SK-N-SH (cell line): ENCODE measurements at regions of chr11 and their contacts with region 1.

Region 1: DNA sequence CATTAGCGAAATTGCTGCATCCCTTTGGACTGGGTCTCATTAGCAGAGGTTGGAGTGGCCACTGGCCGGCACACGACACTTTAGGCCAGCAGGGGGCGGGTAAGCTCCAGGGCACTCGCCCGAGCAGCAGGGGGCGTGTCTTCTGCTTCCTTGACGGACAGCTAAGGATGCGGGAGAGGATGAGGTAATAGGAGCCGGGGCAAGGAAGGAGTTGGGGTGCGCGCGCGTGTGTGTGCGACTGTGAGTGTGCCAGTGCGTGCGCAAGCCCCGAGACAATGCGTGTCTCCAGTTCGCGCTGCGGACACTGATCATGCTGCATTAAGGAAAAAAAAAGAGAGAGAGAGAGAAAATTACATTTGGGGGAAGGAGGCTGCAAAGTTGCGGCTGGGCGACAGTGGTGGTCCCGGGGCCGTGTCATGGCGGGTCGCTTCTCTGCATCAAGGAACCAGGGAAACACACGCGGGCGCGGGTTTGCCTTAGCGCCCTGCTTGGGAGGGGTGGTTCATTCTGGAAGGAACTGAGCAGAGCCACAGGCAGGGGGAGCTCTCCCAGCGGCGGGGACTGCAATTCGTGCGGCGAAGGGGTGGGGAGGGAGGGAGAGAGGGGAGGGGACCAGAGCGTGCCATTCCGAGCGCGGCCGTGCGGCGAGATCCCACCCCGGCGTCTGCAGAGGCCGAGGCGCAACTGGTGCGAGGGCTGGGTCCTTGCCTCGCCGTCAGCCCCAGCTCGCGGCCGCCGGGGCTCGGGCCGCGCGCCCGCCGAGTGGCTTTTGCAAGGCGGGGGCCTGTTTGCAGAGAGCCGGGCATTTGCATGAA is at the start of gene DTX4:
- DNase-seq: peak; percentile 92
- H3K4me3 ChIP-seq: peak within 1 kb of the TSS; percentile 48 to 96
- H3K27ac ChIP-seq: no peak within 1 kb of the TSS
- H3K4me1 ChIP-seq: peaks cover 0 to 12% of the 10 kb centered on the region in 2 experiments; a peak in 1 of 4 replicates
- H3K27me3 ChIP-seq: peaks cover 48% of the 10 kb centered on the region
- CTCF ChIP-seq: peak; percentile 89
- EP300 ChIP-seq: no peak
- RAD21 ChIP-seq: peak; percentile 86
- polyA plus RNA-seq, gene DTX4: 0.02 and 0.05 TPM in 2 replicates

Region 2: GRCh38 chr11:58654079-58654907 is 517.4 kb before region 1 on chr11:
- CTCF ChIA-PET with region 1: no interaction called
- POLR2A ChIA-PET with region 1: no interaction called
- DNase-seq: peak; percentile 64
- H3K4me3 ChIP-seq: peak overlapping the region in 1 of 2 experiments; percentile 27; a peak in 1 of 4 replicates
- H3K27ac ChIP-seq: no peak overlapping the region
- H3K4me1 ChIP-seq: no peaks in the 10 kb centered on the region
- H3K27me3 ChIP-seq: no peaks in the 10 kb centered on the region
- CTCF ChIP-seq: peak; percentile 96
- EP300 ChIP-seq: no peak
- RAD21 ChIP-seq: peak; percentile 77

Region 3: GRCh38 chr11:59142530-59143507 is 28.9 kb before region 1 on chr11 and contains the start of gene FAM111A:
- CTCF ChIA-PET with region 1: interaction called, 10 read pairs
- POLR2A ChIA-PET with region 1: no interaction called
- DNase-seq: peak; percentile 84
- H3K4me3 ChIP-seq: peak within 1 kb of the TSS; percentile 82 to 95
- H3K27ac ChIP-seq: peak within 1 kb of the TSS; percentile 71 to 79
- H3K4me1 ChIP-seq: peaks cover 2 to 4% of the 10 kb centered on the region in 2 experiments; a peak in 2 of 4 replicates
- H3K27me3 ChIP-seq: no peaks in the 10 kb centered on the region
- CTCF ChIP-seq: peak; percentile 47
- EP300 ChIP-seq: no peak
- RAD21 ChIP-seq: no peak
- polyA plus RNA-seq, gene FAM111A: 5.9 and 8.7 TPM in 2 replicates

Region 4: DNA sequence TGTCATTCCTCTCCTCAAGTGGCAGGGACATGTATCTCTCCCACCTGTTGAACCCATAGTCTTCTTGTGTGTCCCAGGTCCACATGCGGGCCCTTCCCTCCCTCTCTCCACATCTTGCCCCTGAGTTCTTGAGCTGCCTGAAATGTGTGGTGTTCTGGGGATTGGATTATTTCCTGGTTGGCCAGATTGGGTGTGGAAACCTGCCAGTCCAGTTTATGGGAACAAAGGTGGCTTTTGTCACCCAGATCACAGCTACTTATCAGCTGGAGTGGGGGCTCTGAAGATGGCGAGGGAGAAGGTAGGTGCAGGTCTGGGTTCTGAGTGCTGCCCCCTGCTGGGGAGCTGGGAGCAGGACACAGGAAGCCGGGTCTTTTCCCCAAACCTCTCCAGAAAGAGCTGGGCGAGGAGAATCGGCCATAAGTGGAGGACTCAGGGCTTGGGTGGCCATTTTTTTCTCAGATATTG is 14.4 kb after region 1 on chr11:
- CTCF ChIA-PET with region 1: interaction called, 58 read pairs
- POLR2A ChIA-PET with region 1: no interaction called
- DNase-seq: peak; percentile 68
- H3K4me3 ChIP-seq: no peak overlapping the region; a peak in 1 of 4 replicates
- H3K27ac ChIP-seq: no peak overlapping the region
- H3K4me1 ChIP-seq: no peaks in the 10 kb centered on the region
- H3K27me3 ChIP-seq: peaks cover 5% of the 10 kb centered on the region; the same call in 1 of the 2 replicates
- CTCF ChIP-seq: peak; percentile 59
- EP300 ChIP-seq: no peak
- RAD21 ChIP-seq: no peak

Region 5: GRCh38 chr11:59197991-59198390 is 26.3 kb after region 1 on chr11:
- CTCF ChIA-PET with region 1: interaction called, 29 read pairs
- POLR2A ChIA-PET with region 1: interaction called, 3 read pairs
- DNase-seq: no peak
- H3K4me3 ChIP-seq: no peak overlapping the region
- H3K27ac ChIP-seq: no peak overlapping the region
- H3K4me1 ChIP-seq: peaks cover 0 to 6% of the 10 kb centered on the region in 2 experiments; a peak in 1 of 4 replicates
- H3K27me3 ChIP-seq: 0 out of 2 replicates have a peak, but pooled peaks cover 9% of the 10 kb centered on the region
- CTCF ChIP-seq: no peak
- EP300 ChIP-seq: no peak
- RAD21 ChIP-seq: no peak

Region 6: DNA sequence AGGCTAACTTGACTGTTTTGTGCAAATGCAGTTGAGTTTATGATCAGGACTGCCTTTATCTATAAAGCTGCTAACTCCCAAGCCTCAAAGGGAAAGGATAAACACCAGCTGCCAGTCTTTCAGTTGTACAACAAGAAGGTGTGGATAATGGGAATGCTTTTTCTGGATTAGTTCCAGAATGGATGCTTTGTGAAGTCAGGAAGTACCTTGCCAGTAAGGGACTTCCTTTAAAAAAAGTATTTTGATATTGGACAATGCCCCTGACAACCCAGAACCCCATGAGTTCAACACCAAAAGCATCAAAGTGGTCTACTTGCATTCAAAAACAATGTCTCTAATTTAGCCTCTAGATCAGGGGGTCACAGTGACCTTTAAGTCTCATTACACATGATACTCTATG is 222.5 kb after region 1 on chr11:
- CTCF ChIA-PET with region 1: no interaction called
- POLR2A ChIA-PET with region 1: no interaction called
- DNase-seq: no peak
- H3K4me3 ChIP-seq: no peak overlapping the region
- H3K27ac ChIP-seq: no peak overlapping the region
- H3K4me1 ChIP-seq: no peaks in the 10 kb centered on the region
- H3K27me3 ChIP-seq: no peaks in the 10 kb centered on the region
- CTCF ChIP-seq: no peak
- EP300 ChIP-seq: no peak
- RAD21 ChIP-seq: no peak

Region 7: DNA sequence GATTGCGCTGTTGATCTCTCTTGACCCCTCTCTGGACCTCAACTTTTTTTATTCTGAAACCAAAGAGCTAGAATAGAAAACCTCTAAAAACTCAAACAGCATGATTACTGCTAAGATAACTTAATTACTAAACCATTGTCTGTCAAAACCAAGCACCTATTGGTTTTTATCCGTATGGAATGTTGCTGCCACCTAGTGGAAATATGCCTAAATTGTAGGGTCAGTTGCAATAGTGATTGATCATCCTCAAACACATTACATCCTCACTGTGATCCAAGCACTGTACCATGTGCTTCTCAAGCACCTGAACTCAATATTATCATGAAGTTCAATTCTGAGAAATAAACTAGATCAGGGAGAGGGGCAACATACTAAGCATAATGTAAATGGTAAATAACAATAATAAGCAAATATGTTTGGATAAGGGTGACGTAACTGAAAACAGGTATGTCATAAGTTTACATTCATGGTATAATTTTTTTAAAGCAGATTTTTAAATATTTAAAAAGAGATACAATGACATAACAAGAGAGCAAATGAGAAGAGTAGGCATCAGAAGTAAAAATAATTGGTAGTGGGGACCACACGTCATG is 258.3 kb after region 1 on chr11:
- CTCF ChIA-PET with region 1: interaction called, 12 read pairs
- POLR2A ChIA-PET with region 1: no interaction called
- DNase-seq: peak; percentile 34
- H3K4me3 ChIP-seq: no peak overlapping the region; a peak in 1 of 4 replicates
- H3K27ac ChIP-seq: no peak overlapping the region
- H3K4me1 ChIP-seq: no peaks in the 10 kb centered on the region
- H3K27me3 ChIP-seq: peaks cover 4% of the 10 kb centered on the region; the same call in 1 of the 2 replicates
- CTCF ChIP-seq: peak; percentile 71
- EP300 ChIP-seq: no peak
- RAD21 ChIP-seq: peak; percentile 62